ENCODE measurements at regions of chr3 and their contacts with region 1.

Region 1: DNA sequence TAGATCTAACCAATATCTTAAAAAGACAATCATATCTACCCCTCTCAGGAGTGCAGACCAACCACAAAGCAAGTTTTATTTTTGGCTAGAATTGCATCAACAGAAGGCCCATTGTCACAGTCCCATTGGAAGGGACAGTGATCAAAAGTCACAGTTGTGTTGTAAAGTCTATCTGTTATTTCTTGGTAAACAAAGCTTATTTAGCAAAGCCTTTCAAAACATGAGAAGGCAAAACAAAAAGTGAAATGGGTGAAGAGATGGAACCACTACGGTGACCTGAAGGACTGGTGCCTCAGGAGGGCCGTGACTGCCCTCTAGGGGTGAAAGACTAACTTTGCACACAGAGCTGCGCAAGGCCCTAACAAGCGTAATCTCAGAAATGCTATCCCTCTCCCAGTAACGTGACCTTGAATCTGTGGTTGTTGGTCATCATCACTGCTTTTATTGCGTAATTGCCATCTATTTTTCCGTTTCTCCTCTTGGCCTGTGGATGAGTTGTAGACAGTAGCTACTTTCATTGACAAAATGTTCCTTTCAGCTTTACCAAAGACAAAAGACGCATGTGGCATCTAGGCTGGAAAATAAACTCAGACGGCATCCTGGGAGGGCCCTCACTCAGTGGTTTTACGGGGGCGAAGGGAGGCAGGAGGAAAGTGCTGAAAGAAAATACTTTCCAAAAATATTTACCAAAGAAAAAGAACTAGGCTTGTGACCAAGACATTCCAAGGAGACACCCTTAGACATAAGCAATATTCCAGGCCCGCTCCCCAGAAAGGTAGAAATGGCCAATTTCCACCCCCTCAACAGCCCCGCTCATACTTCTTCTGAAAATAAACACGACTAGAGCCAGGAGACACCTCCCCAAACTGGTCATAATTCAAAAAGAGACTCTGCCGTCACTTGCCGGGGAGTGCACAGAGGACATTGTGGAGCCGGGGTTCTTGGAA is 79.4 kb downstream of the FRMD4B start:
- DNase-seq: peak; percentile 67
- H3K4me3 ChIP-seq: no peak overlapping the region
- H3K27ac ChIP-seq: no peak overlapping the region
- H3K27me3 ChIP-seq: no peaks in the 10 kb centered on the region
- CTCF ChIP-seq: peak; percentile 97

Region 2: GRCh38 chr3:68681766-68682165 is 624.7 kb before region 1 on chr3:
- CTCF ChIA-PET with region 1: no interaction called
- POLR2A ChIA-PET with region 1: no interaction called
- DNase-seq: no peak
- H3K4me3 ChIP-seq: no peak overlapping the region
- H3K27ac ChIP-seq: no peak overlapping the region
- H3K27me3 ChIP-seq: no peaks in the 10 kb centered on the region
- CTCF ChIP-seq: no peak

Region 3: DNA sequence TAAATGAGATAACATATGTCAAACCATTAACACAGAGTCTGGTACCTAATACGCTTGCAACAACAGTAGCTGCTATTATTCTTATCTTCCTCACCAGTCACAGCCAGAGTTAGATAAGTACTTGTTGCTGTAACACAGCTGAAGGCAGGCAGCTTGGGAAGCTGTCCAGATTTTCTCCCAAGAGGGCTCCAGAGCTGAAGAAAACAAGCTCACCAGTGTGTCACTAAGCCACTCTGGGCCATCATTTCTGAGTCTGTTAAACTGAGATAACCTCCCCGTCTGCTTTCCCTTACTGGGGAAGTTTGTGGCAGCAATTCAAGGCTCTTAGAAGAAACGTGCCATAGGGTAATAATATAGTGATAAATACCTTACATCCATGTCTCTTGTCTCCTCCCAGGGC is 600.4 kb before region 1 on chr3:
- CTCF ChIA-PET with region 1: no interaction called
- POLR2A ChIA-PET with region 1: no interaction called
- DNase-seq: no peak
- H3K4me3 ChIP-seq: no peak overlapping the region
- H3K27ac ChIP-seq: no peak overlapping the region
- H3K27me3 ChIP-seq: no peaks in the 10 kb centered on the region
- CTCF ChIP-seq: no peak

Region 4: DNA sequence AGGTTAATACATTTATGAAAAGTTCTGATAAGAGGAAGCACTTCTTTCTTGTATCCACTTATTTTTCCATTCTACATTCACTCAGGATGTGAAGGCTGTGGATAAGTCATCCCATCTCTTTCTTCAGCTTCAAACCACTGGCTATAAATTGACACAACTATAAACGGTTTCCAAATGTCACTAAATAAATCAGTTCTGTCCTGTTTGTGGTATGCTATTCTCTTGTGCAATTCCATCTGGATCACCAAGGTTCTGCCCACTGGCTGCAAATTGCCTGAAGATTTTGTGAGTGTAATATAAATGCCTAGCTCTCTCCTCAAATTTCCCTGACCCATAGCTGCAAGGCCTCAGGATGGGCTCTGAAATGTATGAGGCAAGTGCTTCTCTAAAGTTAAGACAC is 177.0 kb before region 1 on chr3:
- CTCF ChIA-PET with region 1: interaction called, 16 read pairs
- POLR2A ChIA-PET with region 1: no interaction called
- DNase-seq: no peak
- H3K4me3 ChIP-seq: no peak overlapping the region
- H3K27ac ChIP-seq: no peak overlapping the region
- H3K27me3 ChIP-seq: peaks cover 2% of the 10 kb centered on the region
- CTCF ChIP-seq: no peak

Region 5: GRCh38 chr3:69174871-69175737 is 131.4 kb before region 1 on chr3:
- CTCF ChIA-PET with region 1: interaction called, 11 read pairs
- POLR2A ChIA-PET with region 1: no interaction called
- DNase-seq: no peak
- H3K4me3 ChIP-seq: no peak overlapping the region
- H3K27ac ChIP-seq: no peak overlapping the region
- H3K27me3 ChIP-seq: no peaks in the 10 kb centered on the region
- CTCF ChIP-seq: no peak

Region 6: DNA sequence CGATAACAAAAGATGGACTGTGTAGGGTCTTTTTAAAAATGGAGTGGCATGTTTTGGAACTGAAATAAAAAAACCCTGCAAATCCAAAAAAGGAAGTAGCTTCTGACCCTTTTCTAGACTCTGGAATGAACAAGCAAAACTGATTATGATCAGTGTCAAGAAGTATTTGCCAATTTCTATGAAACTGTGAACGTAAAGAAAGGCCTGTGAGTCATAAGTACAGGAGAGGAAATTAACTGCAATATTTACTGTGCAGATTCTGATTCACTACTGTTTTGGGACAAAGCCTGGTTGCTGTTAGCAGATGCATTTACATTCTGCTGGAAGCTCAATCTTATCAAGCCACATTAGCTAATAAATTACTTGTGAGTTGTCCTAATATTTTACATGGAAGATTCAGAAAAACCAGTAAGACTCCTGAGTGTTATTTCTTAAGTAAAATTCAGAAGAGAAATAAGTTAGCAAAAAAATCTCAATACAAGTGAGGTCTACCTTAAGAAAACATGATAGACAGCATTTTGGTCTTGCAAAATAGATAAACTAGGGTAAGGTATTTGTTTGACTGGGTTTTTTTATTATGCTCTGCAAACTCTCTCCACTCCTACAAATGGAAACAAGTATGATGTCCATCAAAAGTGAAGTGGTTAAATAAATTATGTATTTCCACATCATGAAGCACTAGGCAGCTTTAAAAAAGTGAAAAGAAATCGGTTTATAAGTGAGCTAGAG is 93.9 kb before region 1 on chr3:
- CTCF ChIA-PET with region 1: interaction called, 12 read pairs
- POLR2A ChIA-PET with region 1: no interaction called
- DNase-seq: no peak
- H3K4me3 ChIP-seq: no peak overlapping the region
- H3K27ac ChIP-seq: no peak overlapping the region
- H3K27me3 ChIP-seq: peaks cover 4% of the 10 kb centered on the region
- CTCF ChIP-seq: no peak

Region 7: GRCh38 chr3:69324362-69325025 is 18.0 kb after region 1 on chr3:
- CTCF ChIA-PET with region 1: interaction called, 34 read pairs
- POLR2A ChIA-PET with region 1: no interaction called
- DNase-seq: no peak
- H3K4me3 ChIP-seq: no peak overlapping the region
- H3K27ac ChIP-seq: no peak overlapping the region
- H3K27me3 ChIP-seq: peaks cover 3% of the 10 kb centered on the region
- CTCF ChIP-seq: no peak

Region 8: DNA sequence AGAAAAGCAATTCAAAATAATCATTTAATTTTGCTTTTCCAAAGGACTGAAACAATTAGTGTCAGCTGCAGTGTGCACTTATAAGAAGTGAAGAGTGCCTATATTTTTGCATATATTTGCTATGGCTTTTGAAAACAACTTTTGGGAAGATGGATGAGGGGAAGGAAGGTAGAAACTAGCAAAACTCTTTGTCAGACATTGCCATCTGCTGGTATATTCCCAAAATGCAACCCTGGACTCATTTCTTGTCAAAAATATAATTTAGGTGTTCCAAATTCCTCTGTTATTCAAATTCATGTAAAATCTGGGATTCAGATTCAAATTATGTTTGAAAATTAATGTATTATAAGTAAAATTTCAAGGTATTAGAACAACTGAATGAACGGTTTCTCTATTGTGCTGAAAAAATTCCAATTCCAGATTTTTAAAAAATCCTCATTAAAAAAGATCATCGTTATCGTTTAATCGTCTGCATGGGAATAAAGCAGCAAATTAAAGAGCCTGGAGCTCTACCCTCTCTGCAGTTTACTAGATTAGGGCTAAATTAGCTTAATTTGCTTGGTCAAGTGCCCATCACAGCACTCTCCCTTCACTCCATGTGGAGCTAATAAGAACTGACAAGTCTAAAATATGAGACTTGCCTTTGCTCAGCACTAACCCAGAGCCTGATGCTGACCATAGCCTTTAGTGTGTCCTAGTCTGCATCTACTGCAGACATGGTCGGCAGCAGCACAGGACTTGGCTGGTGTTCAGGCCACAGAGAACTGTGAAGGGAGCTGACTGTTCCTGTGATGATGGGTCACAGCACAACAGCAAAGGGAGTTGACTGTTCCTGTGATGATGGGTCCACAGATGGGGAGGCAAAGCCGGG is 364.8 kb after region 1 on chr3:
- CTCF ChIA-PET with region 1: interaction called, 19 read pairs
- POLR2A ChIA-PET with region 1: no interaction called
- DNase-seq: no peak
- H3K4me3 ChIP-seq: no peak overlapping the region
- H3K27ac ChIP-seq: no peak overlapping the region
- H3K27me3 ChIP-seq: peaks cover 10% of the 10 kb centered on the region
- CTCF ChIP-seq: peak; percentile 76

Measured in AG04450 (cell line).